Breast epithelium (tissue), 4 donors: ENCODE measurements at regions of chr12 and their contacts with region 1.

Region 1: DNA sequence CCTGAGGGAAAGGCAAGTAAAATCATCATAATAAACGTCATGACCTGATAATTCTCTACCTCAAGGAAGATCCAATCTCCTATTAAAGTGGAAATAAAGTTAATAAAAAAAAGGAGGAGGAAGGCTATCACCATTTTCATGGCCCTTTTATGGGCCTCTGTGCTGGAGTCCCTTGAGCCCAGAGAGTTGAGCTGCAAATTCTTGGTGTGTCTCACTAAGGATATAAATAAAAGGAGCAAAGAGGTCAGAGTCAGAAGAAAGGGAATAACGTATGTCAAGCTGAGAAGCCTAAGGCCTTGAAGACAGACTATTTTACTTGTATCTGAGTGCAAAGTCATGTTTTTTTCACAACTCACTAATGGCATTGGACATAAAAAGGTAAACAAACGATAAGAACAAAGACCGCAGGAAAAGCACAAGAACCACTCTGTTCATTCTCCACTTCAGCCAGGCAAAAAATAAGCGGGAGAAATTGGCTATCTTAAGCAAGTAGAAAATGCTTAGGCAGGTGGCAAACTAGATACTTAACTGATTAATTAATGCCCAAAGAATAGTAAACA is 12.0 kb upstream of the SMIM10L1 start:
- DNase-seq: no peak
- H3K4me3 ChIP-seq: no peak overlapping the region
- H3K27ac ChIP-seq: no peak overlapping the region
- H3K4me1 ChIP-seq: no peaks in the 10 kb centered on the region
- H3K27me3 ChIP-seq: no peaks in the 10 kb centered on the region
- CTCF ChIP-seq: no peak
- POLR2A ChIP-seq: no peak

Region 2: GRCh38 chr12:10153271-10154144 is 1005.5 kb before region 1 on chr12:
- intact Hi-C with region 1: no loop called
- DNase-seq: peak; percentile 47 to 64
- H3K4me3 ChIP-seq: peak overlapping the region; percentile 47 to 67 (median 52)
- H3K27ac ChIP-seq: peak overlapping the region; percentile 15 to 48
- H3K4me1 ChIP-seq: no peaks in the 10 kb centered on the region
- H3K27me3 ChIP-seq: no peaks in the 10 kb centered on the region
- CTCF ChIP-seq: peak; percentile 59 to 81 (median 77)
- POLR2A ChIP-seq: no peak

Region 3: DNA sequence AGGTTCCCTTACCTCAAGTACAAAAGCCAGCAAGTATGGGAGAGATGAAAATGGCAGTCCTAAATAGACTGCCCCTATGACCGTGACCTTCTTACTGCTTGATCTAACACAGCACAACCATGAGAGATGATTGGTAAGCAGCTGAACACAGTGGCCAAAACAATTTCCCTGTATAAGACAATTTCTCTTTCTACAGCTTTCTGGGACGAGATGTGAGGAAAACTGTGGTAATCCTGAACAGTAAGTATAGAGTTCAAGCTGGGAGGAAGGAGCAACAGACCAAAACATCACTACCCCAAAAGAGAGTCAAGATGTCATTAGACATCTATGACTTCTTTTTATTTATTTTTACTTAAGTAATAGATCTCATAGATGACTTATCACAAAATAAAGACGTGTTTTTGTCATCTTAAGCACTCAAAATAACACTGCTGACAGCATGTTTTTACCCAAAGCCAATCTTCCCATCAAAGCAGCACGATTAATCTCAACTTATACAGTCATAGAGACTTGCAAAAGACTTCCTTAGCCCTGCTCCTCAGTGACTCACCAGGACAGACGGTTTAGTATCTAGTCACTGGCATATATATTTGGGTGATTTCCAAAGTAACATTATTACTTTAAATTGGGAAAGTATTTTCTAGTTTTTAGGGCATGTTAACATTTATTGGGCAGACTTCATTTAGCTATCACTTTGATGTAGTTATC is 976.5 kb before region 1 on chr12:
- intact Hi-C with region 1: loop called (anchors 5 kb)
- DNase-seq: no peak
- H3K4me3 ChIP-seq: no peak overlapping the region
- H3K27ac ChIP-seq: no peak overlapping the region
- H3K4me1 ChIP-seq: no peaks in the 10 kb centered on the region
- H3K27me3 ChIP-seq: no peaks in the 10 kb centered on the region
- CTCF ChIP-seq: no peak
- POLR2A ChIP-seq: no peak